ENCODE measurements at regions of chr22 and their contacts with region 1.

Region 1: GRCh38 chr22:17830043-17830961 is 56.0 kb upstream of the BID start:
- DNase-seq: peak; percentile 66 to 89 (median 78)
- ATAC-seq: peak; percentile 97
- H3K4me3 ChIP-seq: no peak overlapping the region
- H3K4me3 Mint-ChIP-seq: no peak overlapping the region
- H3K27ac ChIP-seq: no peak overlapping the region
- H3K27ac Mint-ChIP-seq: no peak overlapping the region
- H3K4me1 ChIP-seq: peaks cover 8% of the 10 kb centered on the region
- H3K4me1 Mint-ChIP-seq: peaks cover 8% of the 10 kb centered on the region
- H3K27me3 ChIP-seq: no peaks in the 10 kb centered on the region
- H3K27me3 Mint-ChIP-seq: no peaks in the 10 kb centered on the region
- CTCF ChIP-seq: peak; percentile 99

Region 2: DNA sequence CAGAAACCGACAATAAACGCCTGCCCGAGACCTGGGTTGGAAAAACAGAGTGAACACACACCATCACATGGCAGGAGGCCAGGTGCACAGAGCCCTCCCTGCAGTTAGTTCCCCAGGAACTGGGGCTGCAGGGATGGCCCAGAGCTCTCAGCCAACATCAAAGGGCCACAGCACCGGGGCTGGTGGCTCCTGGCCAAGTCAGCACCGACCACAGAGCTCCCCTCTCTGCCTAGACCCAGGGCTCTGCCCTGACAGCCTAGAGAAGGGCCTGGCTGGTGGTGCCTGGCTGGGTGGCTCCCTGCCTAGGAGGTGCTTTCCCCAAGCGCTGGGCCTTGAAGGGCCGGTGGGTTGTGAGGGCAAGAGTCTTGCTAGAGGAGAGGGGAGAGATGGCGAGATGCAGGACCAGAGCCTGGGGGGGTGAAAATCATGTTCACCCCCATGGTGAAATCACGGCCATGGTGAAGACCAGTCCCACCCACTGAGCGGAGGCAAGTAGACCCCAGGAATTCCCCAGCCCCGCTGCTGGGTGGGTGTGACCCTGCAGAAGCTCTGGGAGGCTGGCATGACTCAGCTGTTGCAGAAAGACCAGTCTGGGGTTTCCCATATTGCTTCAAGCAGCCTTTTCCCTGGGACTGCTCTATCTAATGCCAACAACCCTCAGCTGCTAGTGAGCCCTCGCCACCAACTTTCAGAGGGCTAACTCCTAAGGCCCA is 48.8 kb before region 1 on chr22:
- CTCF ChIA-PET with region 1: no interaction called
- POLR2A ChIA-PET with region 1: no interaction called
- intact Hi-C with region 1: no loop called
- DNase-seq: peak in 9 of 14 experiments; percentile 11 to 89 (median 44)
- ATAC-seq: peak; percentile 22
- H3K4me3 ChIP-seq: no peak overlapping the region
- H3K4me3 Mint-ChIP-seq: peak overlapping the region; percentile 45
- H3K27ac ChIP-seq: peak overlapping the region in 1 of 2 donors; percentile 45
- H3K27ac Mint-ChIP-seq: peak overlapping the region; percentile 96
- H3K4me1 ChIP-seq: peaks cover 68% of the 10 kb centered on the region
- H3K4me1 Mint-ChIP-seq: peaks cover 48% of the 10 kb centered on the region
- H3K27me3 ChIP-seq: no peaks in the 10 kb centered on the region
- H3K27me3 Mint-ChIP-seq: no peaks in the 10 kb centered on the region
- CTCF ChIP-seq: no peak

Region 3: DNA sequence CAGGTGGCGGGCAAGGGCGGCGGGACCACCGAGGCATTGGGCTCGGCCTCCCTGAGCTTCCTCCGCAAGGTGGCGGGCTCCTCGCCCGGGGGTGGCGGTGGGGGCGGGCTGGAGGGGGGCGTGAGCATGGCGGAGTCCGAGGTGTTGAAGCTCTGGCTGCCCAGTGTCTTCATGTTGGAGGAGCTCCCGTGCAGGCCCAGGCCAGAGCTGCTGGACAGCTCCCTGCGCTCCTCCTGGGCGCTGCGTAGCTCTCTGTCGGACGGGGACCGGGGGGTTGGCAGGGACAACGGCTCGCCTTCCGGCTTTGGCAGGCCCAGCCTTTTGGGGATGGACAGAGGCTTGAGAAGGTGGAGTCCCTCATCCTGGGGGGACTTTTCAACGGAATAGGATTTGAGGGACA is 12.1 kb before region 1 on chr22:
- CTCF ChIA-PET with region 1: no interaction called
- POLR2A ChIA-PET with region 1: no interaction called
- intact Hi-C with region 1: no loop called
- DNase-seq: no peak
- ATAC-seq: no peak
- H3K4me3 ChIP-seq: no peak overlapping the region
- H3K4me3 Mint-ChIP-seq: no peak overlapping the region
- H3K27ac ChIP-seq: no peak overlapping the region
- H3K27ac Mint-ChIP-seq: no peak overlapping the region
- H3K4me1 ChIP-seq: no peaks in the 10 kb centered on the region
- H3K4me1 Mint-ChIP-seq: no peaks in the 10 kb centered on the region
- H3K27me3 ChIP-seq: no peaks in the 10 kb centered on the region
- H3K27me3 Mint-ChIP-seq: no peaks in the 10 kb centered on the region
- CTCF ChIP-seq: no peak

Region 4: GRCh38 chr22:18024276-18024947 is 194.1 kb after region 1 on chr22 and contains the start of gene MICAL3:
- CTCF ChIA-PET with region 1: interaction called, 16 read pairs
- POLR2A ChIA-PET with region 1: interaction called, 3 read pairs
- intact Hi-C with region 1: loop called (anchors 1 kb)
- DNase-seq: peak in 13 of 14 experiments; percentile 33 to 85 (median 57)
- ATAC-seq: peak; percentile 92
- H3K4me3 ChIP-seq: peak within 1 kb of the TSS; percentile 47
- H3K4me3 Mint-ChIP-seq: peak within 1 kb of the TSS; percentile 88
- H3K27ac ChIP-seq: no peak within 1 kb of the TSS
- H3K27ac Mint-ChIP-seq: no peak within 1 kb of the TSS
- H3K4me1 ChIP-seq: peaks cover 16% of the 10 kb centered on the region
- H3K4me1 Mint-ChIP-seq: peaks cover 4% of the 10 kb centered on the region
- H3K27me3 ChIP-seq: peaks cover 17 to 22% of the 10 kb centered on the region in 2 experiments
- H3K27me3 Mint-ChIP-seq: peaks cover 69% of the 10 kb centered on the region
- CTCF ChIP-seq: peak; percentile 33
- total RNA-seq, gene MICAL3: 9.4 to 9.9 TPM

Region 5: DNA sequence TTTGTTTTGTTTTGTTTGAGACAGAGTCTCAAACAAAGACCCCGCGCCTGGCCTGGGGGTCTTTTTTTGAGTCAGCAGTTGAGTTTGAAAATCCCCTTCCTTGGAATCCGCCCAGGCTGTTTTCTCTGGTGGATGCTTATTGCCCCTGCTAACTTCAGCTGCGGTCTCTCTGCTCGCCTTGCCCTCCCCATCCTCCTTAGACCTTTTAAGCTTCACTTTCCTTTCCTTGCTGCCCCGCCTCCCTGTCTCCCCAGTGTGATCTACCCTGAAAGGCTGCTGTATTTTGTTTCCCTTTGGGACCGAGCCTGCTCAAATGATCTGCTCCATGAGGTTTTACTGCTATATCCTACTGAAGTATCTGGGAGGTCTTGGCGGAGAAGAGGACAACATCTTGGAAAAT is 322.2 kb after region 1 on chr22:
- CTCF ChIA-PET with region 1: no interaction called
- POLR2A ChIA-PET with region 1: interaction called, 4 read pairs
- intact Hi-C with region 1: loop called in 1 of 2 experiments (anchors 5 kb)
- DNase-seq: peak in 9 of 14 experiments; percentile 11 to 51 (median 42)
- ATAC-seq: peak; percentile 43
- H3K4me3 ChIP-seq: peak overlapping the region; percentile 5
- H3K4me3 Mint-ChIP-seq: peak overlapping the region; percentile 77
- H3K27ac ChIP-seq: no peak overlapping the region
- H3K27ac Mint-ChIP-seq: peak overlapping the region; percentile 93
- H3K4me1 ChIP-seq: peaks cover 25% of the 10 kb centered on the region
- H3K4me1 Mint-ChIP-seq: peaks cover 58% of the 10 kb centered on the region
- H3K27me3 ChIP-seq: no peaks in the 10 kb centered on the region
- H3K27me3 Mint-ChIP-seq: no peaks in the 10 kb centered on the region
- CTCF ChIP-seq: no peak